ENCODE measurements at regions of chr6 and their contacts with region 1.

Region 1: DNA sequence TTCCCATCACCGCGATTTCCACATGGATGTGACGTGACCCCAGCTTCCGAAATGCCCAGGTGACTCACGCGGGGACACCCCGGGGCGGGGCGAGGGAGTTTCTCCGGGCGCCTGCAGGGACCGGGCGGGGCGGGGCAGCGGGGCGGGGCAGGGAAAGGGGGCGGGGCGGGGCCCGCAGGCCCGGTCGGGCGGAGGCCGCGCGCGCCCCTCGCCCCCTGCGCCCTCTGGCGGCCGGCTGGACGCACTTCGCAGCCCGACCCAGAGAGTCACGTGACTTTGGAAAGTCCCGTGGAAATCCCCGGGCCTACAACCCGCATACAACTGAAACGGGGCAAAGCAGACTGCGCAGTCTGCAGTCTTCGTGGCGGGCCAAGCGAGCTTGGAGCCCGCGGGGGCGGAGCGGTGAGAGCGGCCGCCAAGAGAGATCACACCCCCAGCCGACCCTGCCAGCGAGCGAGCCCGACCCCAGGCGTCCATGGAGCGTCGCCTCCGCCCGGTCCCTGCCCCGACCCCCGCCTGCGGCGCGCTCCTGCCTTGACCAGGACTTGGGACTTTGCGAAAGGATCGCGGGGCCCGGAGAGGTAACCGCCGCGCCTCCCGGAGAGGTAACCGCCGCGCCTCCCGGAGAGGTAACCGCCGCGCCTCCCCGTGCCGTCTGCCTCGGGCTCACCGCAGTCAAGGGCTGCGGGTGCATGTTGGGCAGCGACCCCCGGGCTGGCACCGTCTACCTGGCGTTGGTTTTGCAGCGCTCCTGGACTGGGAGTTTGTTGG is at the start of gene TNFAIP3:
- DNase-seq: peak; percentile 96
- ATAC-seq: peak; percentile 65
- H3K4me3 Mint-ChIP-seq: peak within 1 kb of the TSS; percentile 91
- H3K27ac Mint-ChIP-seq: peak within 1 kb of the TSS; percentile 99
- H3K4me1 Mint-ChIP-seq: peaks cover 32% of the 10 kb centered on the region
- H3K27me3 Mint-ChIP-seq: no peaks in the 10 kb centered on the region
- total RNA-seq, gene TNFAIP3: 284 to 371 TPM

Region 2: DNA sequence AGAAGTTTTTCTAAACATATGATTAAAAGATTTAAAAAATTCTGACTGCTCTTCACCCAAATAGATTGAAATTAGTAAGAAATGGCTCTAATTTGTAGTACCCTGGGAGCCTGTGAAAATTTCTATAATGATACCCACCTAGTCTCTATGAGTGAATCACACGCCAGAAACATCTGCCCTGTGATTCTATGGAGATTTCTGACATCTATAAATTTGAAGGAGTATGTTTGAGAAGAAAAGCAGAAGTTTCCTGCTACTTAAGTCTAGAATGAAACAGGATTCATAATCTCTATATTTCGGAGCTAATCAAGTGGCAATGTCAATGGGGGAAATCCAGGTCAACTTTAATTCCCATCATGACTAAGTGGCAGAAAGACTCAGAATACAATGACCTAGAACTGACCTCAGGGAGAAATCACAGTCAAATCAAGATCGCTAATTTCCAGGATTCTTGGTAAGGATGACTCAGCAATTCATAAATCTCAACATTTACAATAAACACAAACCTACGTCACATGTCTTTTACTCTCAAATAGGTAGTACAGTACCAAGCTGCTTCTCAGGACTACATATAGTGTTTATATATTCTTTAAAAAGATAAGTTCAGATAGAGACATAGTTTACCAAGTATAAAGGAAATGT is 186.3 kb before region 1 on chr6:
- CTCF ChIA-PET with region 1: interaction called, 6 read pairs
- POLR2A ChIA-PET with region 1: interaction called, 5 read pairs
- intact Hi-C with region 1: loop called in 1 of 2 experiments (anchors 1 kb)
- DNase-seq: no peak
- ATAC-seq: peak; percentile 62
- H3K4me3 Mint-ChIP-seq: peak overlapping the region; percentile 2
- H3K27ac Mint-ChIP-seq: peak overlapping the region; percentile 67
- H3K4me1 Mint-ChIP-seq: peaks cover 53% of the 10 kb centered on the region
- H3K27me3 Mint-ChIP-seq: peaks cover 12% of the 10 kb centered on the region

Region 3: GRCh38 chr6:137717074-137718073 is 149.7 kb before region 1 on chr6:
- CTCF ChIA-PET with region 1: interaction called, 17 read pairs
- POLR2A ChIA-PET with region 1: interaction called, 10 read pairs
- intact Hi-C with region 1: no loop called
- DNase-seq: peak; percentile 88
- ATAC-seq: peak; percentile 82
- H3K4me3 Mint-ChIP-seq: peak overlapping the region; percentile 0
- H3K27ac Mint-ChIP-seq: peak overlapping the region; percentile 73
- H3K4me1 Mint-ChIP-seq: peaks cover 45% of the 10 kb centered on the region
- H3K27me3 Mint-ChIP-seq: no peaks in the 10 kb centered on the region

Region 4: GRCh38 chr6:137823826-137824555 is 43.1 kb before region 1 on chr6:
- CTCF ChIA-PET with region 1: interaction called, 18 read pairs
- POLR2A ChIA-PET with region 1: interaction called, 10 read pairs
- intact Hi-C with region 1: loop called (anchors 1 to 2 kb)
- DNase-seq: peak; percentile 82
- ATAC-seq: peak; percentile 48
- H3K4me3 Mint-ChIP-seq: peak overlapping the region; percentile 58
- H3K27ac Mint-ChIP-seq: peak overlapping the region; percentile 93
- H3K4me1 Mint-ChIP-seq: peaks cover 86% of the 10 kb centered on the region
- H3K27me3 Mint-ChIP-seq: no peaks in the 10 kb centered on the region

Region 5: DNA sequence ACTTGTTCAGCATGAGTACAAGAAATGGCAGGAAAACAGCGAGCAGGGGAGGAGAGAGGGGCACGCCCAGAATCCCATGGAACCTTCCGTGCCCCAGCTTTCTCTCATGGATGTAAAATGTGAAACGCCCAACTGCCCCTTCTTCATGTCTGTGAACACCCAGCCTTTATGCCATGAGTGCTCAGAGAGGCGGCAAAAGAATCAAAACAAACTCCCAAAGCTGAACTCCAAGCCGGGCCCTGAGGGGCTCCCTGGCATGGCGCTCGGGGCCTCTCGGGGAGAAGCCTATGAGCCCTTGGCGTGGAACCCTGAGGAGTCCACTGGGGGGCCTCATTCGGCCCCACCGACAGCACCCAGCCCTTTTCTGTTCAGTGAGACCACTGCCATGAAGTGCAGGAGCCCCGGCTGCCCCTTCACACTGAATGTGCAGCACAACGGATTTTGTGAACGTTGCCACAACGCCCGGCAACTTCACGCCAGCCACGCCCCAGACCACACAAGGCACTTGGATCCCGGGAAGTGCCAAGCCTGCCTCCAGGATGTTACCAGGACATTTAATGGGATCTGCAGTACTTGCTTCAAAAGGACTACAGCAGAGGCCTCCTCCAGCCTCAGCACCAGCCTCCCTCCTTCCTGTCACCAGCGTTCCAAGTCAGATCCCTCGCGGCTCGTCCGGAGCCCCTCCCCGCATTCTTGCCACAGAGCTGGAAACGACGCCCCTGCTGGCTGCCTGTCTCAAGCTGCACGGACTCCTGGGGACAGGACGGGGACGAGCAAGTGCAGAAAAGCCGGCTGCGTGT is 11.6 kb after region 1 on chr6:
- CTCF ChIA-PET with region 1: interaction called, 16 read pairs
- POLR2A ChIA-PET with region 1: interaction called, 8 read pairs
- intact Hi-C with region 1: no loop called
- DNase-seq: no peak
- ATAC-seq: no peak
- H3K4me3 Mint-ChIP-seq: peak overlapping the region; percentile 60
- H3K27ac Mint-ChIP-seq: peak overlapping the region; percentile 99
- H3K4me1 Mint-ChIP-seq: peaks cover 86% of the 10 kb centered on the region
- H3K27me3 Mint-ChIP-seq: no peaks in the 10 kb centered on the region

Region 6: DNA sequence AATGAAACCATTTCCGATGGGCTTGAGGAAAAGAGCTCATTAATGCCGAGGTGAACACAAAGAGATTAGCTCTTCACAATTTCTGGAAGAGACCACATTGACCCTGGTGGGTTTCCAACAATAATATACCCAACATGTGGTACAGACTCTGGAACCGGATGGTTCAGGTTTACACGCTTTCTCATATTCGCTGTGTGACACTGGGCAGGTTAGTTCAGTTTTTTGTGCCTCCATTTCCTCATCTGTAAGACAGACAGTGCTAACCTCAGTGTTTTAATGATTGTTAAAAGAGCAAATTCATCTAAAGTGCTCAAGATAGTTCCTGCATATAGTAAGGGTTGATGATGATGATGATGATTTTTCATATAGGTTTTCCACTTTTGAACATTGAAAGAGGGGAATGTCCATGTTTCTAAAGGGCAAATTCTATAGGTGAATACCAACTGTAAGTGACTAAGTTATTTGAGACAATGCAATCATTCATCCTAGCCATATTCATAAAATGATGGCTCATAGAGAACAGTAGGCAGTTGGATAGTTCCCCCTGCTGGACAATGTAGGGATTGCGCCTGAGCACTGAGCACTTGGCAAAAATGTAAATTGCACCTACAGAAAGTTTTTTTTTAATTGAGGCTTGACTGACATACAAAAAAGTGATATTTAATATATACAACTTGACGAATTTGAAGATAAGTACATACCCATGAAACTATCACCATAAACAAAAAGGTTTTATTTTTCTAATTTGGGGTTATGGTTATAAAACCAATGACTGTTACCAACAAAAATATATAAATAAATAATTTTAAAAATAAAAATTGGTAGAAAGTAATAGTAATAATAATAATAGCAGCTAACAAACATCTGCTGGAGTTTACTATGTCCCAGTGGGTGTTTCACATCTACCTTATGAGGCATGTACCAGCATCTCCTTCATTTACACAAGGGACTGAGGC is 242.2 kb after region 1 on chr6:
- CTCF ChIA-PET with region 1: interaction called, 3 read pairs
- POLR2A ChIA-PET with region 1: no interaction called
- intact Hi-C with region 1: loop called (anchors 1 to 5 kb)
- DNase-seq: peak; percentile 89
- ATAC-seq: peak; percentile 49
- H3K4me3 Mint-ChIP-seq: no peak overlapping the region
- H3K27ac Mint-ChIP-seq: no peak overlapping the region
- H3K4me1 Mint-ChIP-seq: peaks cover 14% of the 10 kb centered on the region
- H3K27me3 Mint-ChIP-seq: peaks cover 34% of the 10 kb centered on the region

Measured in activated CD4-positive, alpha-beta T cell treated with anti-CD3 and anti-CD28 coated beads for 36 hours (primary cell).